IMR-90 (cell line): ENCODE measurements at regions of chr18 and their contacts with region 1.

Region 1: GRCh38 chr18:50967714-50968661 is at the start of gene ELAC1:
- DNase-seq: peak; percentile 76
- ATAC-seq: peak; percentile 97
- H3K4me3 ChIP-seq: peak within 1 kb of the TSS; percentile 61
- H3K27ac ChIP-seq: peak within 1 kb of the TSS; percentile 83
- H3K4me1 ChIP-seq: peaks cover 3% of the 10 kb centered on the region; the same call in 1 of the 2 replicates
- H3K27me3 ChIP-seq: no peaks in the 10 kb centered on the region
- CTCF ChIP-seq: 0 out of 2 replicates have a peak, but pooled peaks have one; percentile 0
- POLR2A ChIP-seq: peak; percentile 92
- RAD21 ChIP-seq: no peak
- total RNA-seq, gene ELAC1: 5.2 and 6.4 TPM in 2 replicates

Region 2: DNA sequence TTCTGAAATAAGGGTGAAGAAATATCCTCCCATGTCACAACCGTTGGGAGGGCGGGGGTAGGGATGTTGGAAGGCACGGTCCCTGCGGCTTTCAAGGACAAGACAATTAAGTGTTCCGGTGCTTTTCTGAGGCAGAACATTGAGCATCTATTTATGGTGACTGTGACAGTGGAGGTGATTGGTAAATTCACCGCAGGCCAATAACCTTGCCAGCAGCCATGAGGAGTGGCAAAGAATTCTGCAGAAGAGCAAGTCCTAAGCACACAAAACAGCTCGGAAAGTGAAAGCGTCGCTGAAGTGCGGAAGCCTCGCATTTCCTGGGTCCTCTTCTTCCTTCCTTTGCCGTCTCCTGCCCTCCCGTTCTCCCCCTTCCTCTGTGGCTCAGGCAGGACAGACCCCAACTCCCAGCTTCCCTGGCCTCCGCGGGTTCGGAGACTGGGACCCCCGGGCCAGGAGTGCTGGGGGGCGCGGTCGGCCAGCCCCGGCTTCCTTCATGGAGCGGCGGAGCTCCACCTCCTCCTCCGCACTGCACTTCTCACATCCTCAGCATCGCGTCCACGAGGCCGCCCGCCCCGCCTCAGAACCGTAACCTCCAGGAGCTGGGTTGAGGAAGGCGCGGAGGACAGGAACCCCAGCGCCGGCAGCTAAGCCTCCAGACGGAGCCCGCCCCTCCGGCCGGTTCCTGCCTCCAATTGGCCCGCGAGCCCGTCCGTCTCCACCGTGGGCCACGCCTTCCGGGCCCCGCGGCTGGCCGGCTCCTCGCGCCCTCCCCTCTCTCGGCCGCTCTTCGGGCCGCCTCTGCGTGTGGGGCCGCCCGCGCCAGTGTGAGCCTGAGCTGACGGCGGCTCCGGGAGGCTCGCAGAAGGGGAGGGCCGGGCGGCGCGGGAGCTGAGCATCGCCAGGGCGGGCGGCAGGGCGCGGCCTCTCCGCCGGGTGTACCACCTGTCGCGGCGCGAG is 89.4 kb before region 1 on chr18 and contains the start of gene ME2:
- CTCF ChIA-PET with region 1: no interaction called
- POLR2A ChIA-PET with region 1: no interaction called
- dilution Hi-C with region 1: no loop called
- in situ Hi-C with region 1: no loop called
- intact Hi-C with region 1: loop called (anchors 2 kb)
- DNase-seq: peak; percentile 86
- ATAC-seq: peak; percentile 97
- H3K4me3 ChIP-seq: peak within 1 kb of the TSS; percentile 86
- H3K27ac ChIP-seq: peak within 1 kb of the TSS; percentile 86
- H3K4me1 ChIP-seq: no peaks in the 10 kb centered on the region
- H3K27me3 ChIP-seq: no peaks in the 10 kb centered on the region
- CTCF ChIP-seq: no peak
- POLR2A ChIP-seq: peak; percentile 75
- RAD21 ChIP-seq: no peak
- total RNA-seq, gene ME2: 32.6 and 50.0 TPM in 2 replicates

Region 3: GRCh38 chr18:51039138-51040112 is 71.4 kb after region 1 on chr18:
- CTCF ChIA-PET with region 1: no interaction called
- POLR2A ChIA-PET with region 1: no interaction called
- dilution Hi-C with region 1: no loop called
- in situ Hi-C with region 1: no loop called
- intact Hi-C with region 1: no loop called
- DNase-seq: peak; percentile 46
- ATAC-seq: no peak
- H3K4me3 ChIP-seq: no peak overlapping the region
- H3K27ac ChIP-seq: no peak overlapping the region
- H3K4me1 ChIP-seq: peaks cover 6% of the 10 kb centered on the region
- H3K27me3 ChIP-seq: no peaks in the 10 kb centered on the region
- CTCF ChIP-seq: no peak
- POLR2A ChIP-seq: no peak
- RAD21 ChIP-seq: no peak

Region 4: DNA sequence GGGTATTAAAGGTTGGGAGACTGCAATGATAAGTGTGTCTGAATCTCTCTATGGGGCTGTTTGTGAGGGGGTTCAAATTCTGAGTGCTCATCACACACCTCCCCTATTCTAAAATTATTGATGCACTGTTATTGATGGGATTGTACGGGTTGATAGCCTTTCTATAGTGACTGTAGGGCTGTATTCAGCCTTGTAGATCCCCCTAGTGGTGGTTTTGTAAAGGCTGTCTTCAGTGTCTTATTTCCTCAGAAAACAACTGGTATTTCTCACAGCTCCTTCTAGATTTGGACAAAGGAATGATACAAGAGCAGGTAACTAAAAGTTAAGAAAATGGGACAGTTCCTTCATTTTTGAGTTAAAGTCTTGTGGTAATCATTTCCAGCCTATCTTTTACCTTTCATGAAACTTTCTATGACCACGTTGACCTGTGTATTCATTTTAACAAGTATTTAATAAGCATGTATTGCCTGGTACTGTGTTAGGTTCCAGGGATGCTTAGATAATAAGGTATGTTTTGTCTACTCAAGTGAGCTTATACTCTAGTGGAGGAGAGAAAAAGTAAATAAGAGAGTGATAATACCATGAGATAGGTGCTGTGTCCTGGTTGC is 83.2 kb after region 1 on chr18:
- CTCF ChIA-PET with region 1: no interaction called
- POLR2A ChIA-PET with region 1: interaction called, 5 read pairs
- dilution Hi-C with region 1: no loop called
- in situ Hi-C with region 1: no loop called
- intact Hi-C with region 1: loop called (anchors 5 kb)
- DNase-seq: peak; percentile 65
- ATAC-seq: peak; percentile 95
- H3K4me3 ChIP-seq: no peak overlapping the region
- H3K27ac ChIP-seq: no peak overlapping the region
- H3K4me1 ChIP-seq: peaks cover 2% of the 10 kb centered on the region; the same call in 1 of the 2 replicates
- H3K27me3 ChIP-seq: no peaks in the 10 kb centered on the region
- CTCF ChIP-seq: peak; percentile 75
- POLR2A ChIP-seq: no peak
- RAD21 ChIP-seq: peak; percentile 74

Region 5: DNA sequence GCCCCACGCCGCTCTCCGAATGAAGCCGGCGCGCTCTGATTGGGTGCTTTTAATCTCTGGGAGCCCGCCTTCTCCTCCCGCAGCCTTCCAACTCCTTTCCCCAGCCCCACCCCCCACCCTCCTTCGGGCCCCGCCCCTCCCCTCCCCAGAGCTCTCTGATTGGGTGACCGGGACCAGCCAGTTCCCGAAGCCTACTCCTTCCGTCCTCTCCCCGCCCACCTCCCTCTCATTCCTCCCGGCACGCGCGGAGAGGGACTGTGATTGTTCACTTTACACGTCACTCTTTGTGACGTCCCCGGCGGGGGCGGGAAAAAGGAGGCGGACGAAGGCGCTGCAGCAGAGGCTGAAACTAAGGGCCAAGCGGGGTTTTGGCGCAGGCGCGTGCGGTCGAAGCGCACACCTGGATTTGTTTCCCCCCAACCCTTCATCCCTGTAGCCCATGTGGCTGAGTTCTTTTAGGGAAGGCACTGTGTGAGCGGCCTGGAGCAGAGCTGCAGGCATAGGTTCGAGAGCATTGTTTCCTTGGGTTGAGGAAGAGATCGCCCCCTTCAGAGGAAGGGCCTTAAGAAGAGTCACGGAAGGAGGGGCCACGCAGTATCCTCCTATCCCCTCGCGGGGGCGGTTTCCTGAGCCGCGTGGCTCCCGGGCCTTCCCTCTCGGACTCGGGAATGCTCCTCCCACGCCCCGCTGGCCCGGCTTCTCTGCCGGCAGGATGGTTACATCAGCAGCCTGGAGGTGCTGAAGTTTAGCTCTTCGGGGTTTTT is 229.9 kb after region 1 on chr18 and contains the start of gene MEX3C:
- CTCF ChIA-PET with region 1: no interaction called
- POLR2A ChIA-PET with region 1: no interaction called
- dilution Hi-C with region 1: no loop called
- in situ Hi-C with region 1: no loop called
- intact Hi-C with region 1: loop called (anchors 10 kb)
- DNase-seq: peak; percentile 99
- ATAC-seq: peak; percentile 88
- H3K4me3 ChIP-seq: peak within 1 kb of the TSS; percentile 98
- H3K27ac ChIP-seq: peak within 1 kb of the TSS; percentile 90
- H3K4me1 ChIP-seq: peaks cover 2% of the 10 kb centered on the region; the same call in 1 of the 2 replicates
- H3K27me3 ChIP-seq: no peaks in the 10 kb centered on the region
- CTCF ChIP-seq: 0 out of 2 replicates have a peak, but pooled peaks have one; percentile 10
- POLR2A ChIP-seq: no peak
- RAD21 ChIP-seq: no peak
- total RNA-seq, gene MEX3C: 42.8 and 50.9 TPM in 2 replicates